ENCODE measurements at regions of chr4 and their contacts with region 1.

Region 1: GRCh38 chr4:113411496-113411938 is 350.0 kb downstream of the CAMK2D start:
- DNase-seq: peak in 1 of 2 donors; percentile 23
- ATAC-seq: peak in 6 of 8 donors; percentile 26 to 64 (median 43)
- H3K4me3 ChIP-seq: no peak overlapping the region
- H3K27ac ChIP-seq: peak overlapping the region in 1 of 10 donors; percentile 36
- H3K4me1 ChIP-seq: peaks cover 0 to 22% (median 0%) of the 10 kb centered on the region in 9 donors
- H3K27me3 ChIP-seq: no peaks in the 10 kb centered on the region
- CTCF ChIP-seq: peak in 1 of 9 donors; percentile 30

Region 2: DNA sequence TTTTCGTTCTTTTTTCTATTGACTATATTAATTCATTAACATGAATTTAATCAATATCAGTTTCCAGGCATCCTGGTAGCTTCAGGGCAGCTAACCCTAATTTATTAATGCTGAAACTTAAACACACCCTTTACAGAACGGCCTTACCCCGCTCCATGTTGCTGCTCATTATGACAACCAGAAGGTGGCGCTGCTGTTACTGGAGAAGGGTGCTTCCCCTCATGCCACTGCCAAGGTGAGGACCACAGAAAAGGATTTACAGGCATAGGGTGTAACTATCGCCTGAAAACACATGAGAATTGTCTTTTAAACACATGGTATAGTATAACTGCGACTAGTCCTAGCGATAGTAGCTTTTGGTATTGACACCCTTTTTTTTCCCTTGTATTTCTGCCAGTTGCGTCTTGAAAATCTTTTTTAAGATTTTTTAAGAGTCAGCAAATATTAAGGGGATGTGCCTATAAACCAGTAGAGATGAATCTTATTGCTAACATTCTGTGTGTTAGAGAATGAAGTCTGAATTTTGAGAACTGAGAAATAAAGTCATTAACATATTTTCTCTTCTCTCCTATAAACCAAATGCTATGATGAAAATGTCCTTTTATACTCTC is 133.1 kb before region 1 on chr4:
- intact Hi-C with region 1: no loop called
- DNase-seq: peak; percentile 34 to 81
- ATAC-seq: peak; percentile 80 to 91 (median 86)
- H3K4me3 ChIP-seq: no peak overlapping the region
- H3K27ac ChIP-seq: no peak overlapping the region
- H3K4me1 ChIP-seq: peaks cover 0 to 24% (median 6%) of the 10 kb centered on the region in 9 donors
- H3K27me3 ChIP-seq: no peaks in the 10 kb centered on the region
- CTCF ChIP-seq: peak; percentile 56 to 90 (median 84)

Region 3: DNA sequence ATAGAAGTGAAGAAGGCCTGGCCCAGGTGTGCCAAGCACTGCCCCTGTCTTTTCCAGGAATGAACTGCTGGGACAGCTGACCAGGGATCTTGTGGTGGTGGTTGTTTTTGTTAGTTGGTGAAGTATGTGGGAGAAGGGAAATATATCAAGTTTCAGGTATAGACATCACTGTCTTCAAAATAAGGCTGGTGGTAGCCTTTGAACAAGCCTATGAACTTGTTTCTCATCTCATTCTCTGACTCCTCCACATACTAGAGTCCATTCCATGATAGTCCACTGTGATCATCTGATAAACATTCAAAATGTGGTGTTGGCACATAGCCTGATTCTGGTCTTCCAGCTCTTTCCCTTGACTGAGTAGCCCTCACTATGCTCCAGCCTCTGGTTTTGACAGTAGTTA is 46.4 kb after region 1 on chr4:
- intact Hi-C with region 1: no loop called
- DNase-seq: no peak
- ATAC-seq: no peak
- H3K4me3 ChIP-seq: no peak overlapping the region
- H3K27ac ChIP-seq: no peak overlapping the region
- H3K4me1 ChIP-seq: peaks cover 6 to 23% (median 11%) of the 10 kb centered on the region in 9 donors
- H3K27me3 ChIP-seq: no peaks in the 10 kb centered on the region
- CTCF ChIP-seq: no peak

Region 4: GRCh38 chr4:114077610-114078009 is 666.1 kb after region 1 on chr4:
- intact Hi-C with region 1: loop called in 1 of 10 experiments (anchors 10 kb)
- DNase-seq: no peak
- ATAC-seq: no peak
- H3K4me3 ChIP-seq: no peak overlapping the region
- H3K27ac ChIP-seq: no peak overlapping the region
- H3K4me1 ChIP-seq: peaks cover 0 to 4% (median 0%) of the 10 kb centered on the region in 9 donors
- H3K27me3 ChIP-seq: no peaks in the 10 kb centered on the region
- CTCF ChIP-seq: no peak

Measured in heart right ventricle (tissue), 16 donors.